ENCODE measurements at regions of chr18 and their contacts with region 1.

Region 1: DNA sequence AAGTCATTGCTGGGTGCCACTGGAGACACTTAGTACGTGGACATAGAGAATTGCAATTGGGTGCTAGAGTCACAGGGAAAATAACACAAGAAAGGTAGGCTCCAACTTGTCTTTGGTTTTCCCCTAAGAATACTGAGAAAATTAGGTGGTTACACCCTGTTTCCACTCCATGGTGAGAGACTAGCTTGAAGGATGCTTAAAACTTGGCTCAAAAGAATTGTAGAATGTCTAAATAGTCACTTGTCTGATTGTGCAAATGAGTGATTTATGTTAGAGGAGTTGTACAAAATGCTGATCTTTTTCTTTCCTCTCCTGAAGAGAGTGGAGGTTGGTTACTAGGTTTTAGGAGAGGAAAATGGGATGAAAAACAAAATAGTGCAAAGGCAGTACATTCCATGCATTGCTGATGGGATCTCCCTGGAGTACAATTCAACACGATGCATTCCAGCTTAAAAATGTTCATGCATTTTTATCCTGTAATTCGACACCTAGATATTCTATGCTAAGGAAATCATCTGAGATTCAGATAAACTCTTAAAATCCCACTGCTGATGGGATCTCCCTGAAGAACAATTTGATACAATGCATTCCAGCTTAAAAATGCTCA is 2.2 kb upstream of the SERPINB12 start:
- DNase-seq: peak; percentile 59
- H3K4me3 ChIP-seq: no peak overlapping the region
- CTCF ChIP-seq: no peak

Region 2: GRCh38 chr18:63553117-63553516 is 13.1 kb after region 1 on chr18:
- CTCF ChIA-PET with region 1: interaction called, 10 read pairs
- POLR2A ChIA-PET with region 1: interaction called, 9 read pairs
- DNase-seq: peak; percentile 95
- H3K4me3 ChIP-seq: no peak overlapping the region
- CTCF ChIP-seq: no peak